GM12878 (cell line): ENCODE measurements at regions of chr5 and their contacts with region 1.

Region 1: GRCh38 chr5:171418316-171418981 is 998 bp upstream of the FGF18 start:
- DNase-seq: no peak
- ATAC-seq: peak; percentile 88
- H3K4me3 ChIP-seq: peak overlapping the region; percentile 55; the same call in 1 of the 2 replicates
- H3K27ac ChIP-seq: no peak overlapping the region
- H3K4me1 ChIP-seq: peaks cover 7% of the 10 kb centered on the region
- H3K27me3 ChIP-seq: peaks cover 4 to 5% of the 10 kb centered on the region in 2 experiments; a peak in 3 of 4 replicates
- CTCF ChIP-seq: peak; percentile 87 to 98 (median 89)
- EP300 ChIP-seq: no peak
- POLR2A ChIP-seq: no peak
- RAD21 ChIP-seq: peak; percentile 80

Region 2: GRCh38 chr5:171405601-171406005 is 12.8 kb before region 1 on chr5:
- CTCF ChIA-PET with region 1: interaction called, 10 read pairs
- POLR2A ChIA-PET with region 1: no interaction called
- RAD21 ChIA-PET with region 1: no interaction called
- SMC1A ChIA-PET with region 1: interaction called, 3 read pairs
- in situ Hi-C with region 1: no loop called
- intact Hi-C with region 1: no loop called
- DNase-seq: no peak
- ATAC-seq: peak; percentile 61
- H3K4me3 ChIP-seq: no peak overlapping the region
- H3K27ac ChIP-seq: no peak overlapping the region
- H3K4me1 ChIP-seq: no peaks in the 10 kb centered on the region
- H3K27me3 ChIP-seq: no peaks in the 10 kb centered on the region
- CTCF ChIP-seq: peak; percentile 18 to 36 (median 32); a peak in 2 of 6 replicates
- EP300 ChIP-seq: no peak
- POLR2A ChIP-seq: no peak
- RAD21 ChIP-seq: no peak

Region 3: GRCh38 chr5:171850324-171851285 is 432.2 kb after region 1 on chr5:
- CTCF ChIA-PET with region 1: no interaction called
- POLR2A ChIA-PET with region 1: no interaction called
- RAD21 ChIA-PET with region 1: no interaction called
- SMC1A ChIA-PET with region 1: no interaction called
- in situ Hi-C with region 1: no loop called
- intact Hi-C with region 1: loop called (anchors 5 kb)
- DNase-seq: no peak
- ATAC-seq: peak; percentile 52
- H3K4me3 ChIP-seq: no peak overlapping the region
- H3K27ac ChIP-seq: no peak overlapping the region
- H3K4me1 ChIP-seq: no peaks in the 10 kb centered on the region
- H3K27me3 ChIP-seq: no peaks in the 10 kb centered on the region
- CTCF ChIP-seq: peak; percentile 14 to 32 (median 25); a peak in 3 of 6 replicates
- EP300 ChIP-seq: no peak
- POLR2A ChIP-seq: no peak
- RAD21 ChIP-seq: 0 out of 2 replicates have a peak, but pooled peaks have one; percentile 15

Region 4: GRCh38 chr5:171927345-171927941 is 509.0 kb after region 1 on chr5:
- CTCF ChIA-PET with region 1: no interaction called
- POLR2A ChIA-PET with region 1: no interaction called
- RAD21 ChIA-PET with region 1: no interaction called
- SMC1A ChIA-PET with region 1: no interaction called
- in situ Hi-C with region 1: no loop called
- intact Hi-C with region 1: no loop called
- DNase-seq: no peak
- ATAC-seq: peak; percentile 38
- H3K4me3 ChIP-seq: no peak overlapping the region
- H3K27ac ChIP-seq: no peak overlapping the region
- H3K4me1 ChIP-seq: peaks cover 17% of the 10 kb centered on the region
- H3K27me3 ChIP-seq: no peaks in the 10 kb centered on the region
- CTCF ChIP-seq: peak in 1 of 3 experiments; percentile 37; a peak in 2 of 6 replicates
- EP300 ChIP-seq: no peak
- POLR2A ChIP-seq: no peak
- RAD21 ChIP-seq: peak; percentile 15; the same call in 1 of the 2 replicates

Region 5: DNA sequence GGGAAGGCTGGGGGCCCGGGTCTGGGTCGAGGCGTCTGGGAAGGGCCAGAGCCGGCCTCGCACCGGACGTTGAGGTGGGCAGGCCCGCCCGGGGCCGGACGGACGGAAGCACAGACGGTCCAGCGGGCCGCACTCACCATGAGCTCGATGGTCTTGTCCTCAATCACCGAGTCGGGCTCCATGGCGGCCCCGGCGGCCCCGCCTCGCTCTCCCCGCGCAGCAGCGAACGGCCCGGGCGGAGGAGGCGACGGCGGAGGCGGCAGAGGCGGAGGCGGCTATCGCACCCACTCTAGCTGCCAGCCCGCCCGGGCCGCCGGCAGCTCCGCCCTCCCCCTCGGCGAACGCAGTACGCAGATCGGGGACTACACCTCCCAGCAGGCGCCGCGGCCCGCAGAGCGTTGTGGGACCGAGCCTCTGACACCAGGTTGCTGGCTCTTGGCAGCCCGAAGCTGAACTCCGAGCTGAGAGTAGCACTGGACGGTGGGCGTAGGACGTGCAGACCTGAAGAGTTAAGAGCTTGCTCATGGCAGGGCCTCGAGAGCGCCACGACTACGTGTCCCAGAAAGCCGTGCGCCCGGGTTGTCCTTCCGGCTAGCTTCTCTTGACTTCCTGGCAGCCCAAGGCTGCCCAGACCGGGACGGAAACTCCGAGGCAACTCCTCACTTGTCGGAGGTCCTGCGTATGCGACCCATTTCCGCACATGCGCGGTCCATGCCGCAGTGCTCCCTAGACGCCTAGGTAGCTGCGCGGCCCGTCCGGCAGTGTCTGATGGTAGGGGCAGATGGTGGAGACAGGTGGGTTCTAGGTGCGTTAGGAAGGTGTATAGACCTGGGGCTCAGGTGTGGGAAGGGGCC is 588.1 kb after region 1 on chr5 and contains the start of gene FBXW11:
- CTCF ChIA-PET with region 1: no interaction called
- POLR2A ChIA-PET with region 1: no interaction called
- RAD21 ChIA-PET with region 1: no interaction called
- SMC1A ChIA-PET with region 1: interaction called, 4 read pairs
- in situ Hi-C with region 1: no loop called
- intact Hi-C with region 1: loop called (anchors 10 kb)
- DNase-seq: peak; percentile 87
- ATAC-seq: peak; percentile 89
- H3K4me3 ChIP-seq: peak within 1 kb of the TSS; percentile 100
- H3K27ac ChIP-seq: peak within 1 kb of the TSS; percentile 98
- H3K4me1 ChIP-seq: peaks cover 28% of the 10 kb centered on the region
- H3K27me3 ChIP-seq: no peaks in the 10 kb centered on the region
- CTCF ChIP-seq: no peak
- EP300 ChIP-seq: no peak
- POLR2A ChIP-seq: peak; percentile 97
- RAD21 ChIP-seq: no peak
- polyA plus RNA-seq, gene FBXW11: 4.3 to 7.7 TPM

Region 6: DNA sequence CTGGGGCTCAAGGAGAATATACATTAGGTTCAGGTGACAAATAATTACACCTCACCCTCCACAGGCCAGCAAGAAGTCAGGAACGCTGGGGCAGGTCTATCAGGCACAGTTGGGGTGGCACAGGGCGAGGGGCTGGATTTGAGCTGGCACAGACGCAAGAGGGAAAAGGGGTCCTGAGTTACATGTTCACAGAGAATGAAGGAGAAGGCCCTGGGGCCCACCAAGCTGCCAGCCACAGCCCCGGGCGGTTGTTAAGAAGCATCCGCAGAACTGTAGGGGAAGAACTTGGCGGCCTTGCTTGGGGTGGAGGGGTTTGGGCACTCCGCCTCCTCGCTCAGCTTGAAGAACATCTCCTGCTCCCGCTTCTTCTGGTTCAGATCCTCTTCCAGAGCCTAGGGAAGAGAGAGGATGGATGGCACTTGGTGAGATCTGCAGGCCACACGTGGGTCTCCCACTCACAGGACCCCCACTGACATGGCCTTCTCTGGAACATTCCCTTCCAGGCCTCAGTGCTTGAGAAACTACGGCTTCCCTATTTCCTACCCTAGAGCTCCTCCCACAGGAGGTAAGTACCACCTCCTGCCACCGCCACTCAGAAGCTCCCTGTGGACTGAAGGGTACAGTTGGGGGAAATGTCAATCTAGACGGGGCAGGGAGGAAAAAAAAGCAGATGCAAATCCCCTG is 626.3 kb after region 1 on chr5:
- CTCF ChIA-PET with region 1: no interaction called
- POLR2A ChIA-PET with region 1: no interaction called
- RAD21 ChIA-PET with region 1: no interaction called
- SMC1A ChIA-PET with region 1: no interaction called
- in situ Hi-C with region 1: loop called (anchors 5 kb)
- intact Hi-C with region 1: loop called (anchors 1 kb)
- DNase-seq: no peak
- ATAC-seq: no peak
- H3K4me3 ChIP-seq: no peak overlapping the region
- H3K27ac ChIP-seq: no peak overlapping the region
- H3K4me1 ChIP-seq: no peaks in the 10 kb centered on the region
- H3K27me3 ChIP-seq: no peaks in the 10 kb centered on the region
- CTCF ChIP-seq: 0 out of 6 replicates have a peak, but pooled peaks of 1 of the 3 experiments have one; percentile 1
- EP300 ChIP-seq: no peak
- POLR2A ChIP-seq: no peak
- RAD21 ChIP-seq: peak; percentile 17; the same call in 1 of the 2 replicates